ENCODE measurements at regions of chr7 and their contacts with region 1.

Region 1: GRCh38 chr7:38222481-38223096 is 44.5 kb downstream of the STARD3NL start:
- DNase-seq: peak; percentile 50
- H3K4me3 ChIP-seq: no peak overlapping the region
- H3K27ac ChIP-seq: no peak overlapping the region
- H3K4me1 ChIP-seq: no peaks in the 10 kb centered on the region
- H3K27me3 ChIP-seq: no peaks in the 10 kb centered on the region
- CTCF ChIP-seq: peak; percentile 87 to 89

Region 2: DNA sequence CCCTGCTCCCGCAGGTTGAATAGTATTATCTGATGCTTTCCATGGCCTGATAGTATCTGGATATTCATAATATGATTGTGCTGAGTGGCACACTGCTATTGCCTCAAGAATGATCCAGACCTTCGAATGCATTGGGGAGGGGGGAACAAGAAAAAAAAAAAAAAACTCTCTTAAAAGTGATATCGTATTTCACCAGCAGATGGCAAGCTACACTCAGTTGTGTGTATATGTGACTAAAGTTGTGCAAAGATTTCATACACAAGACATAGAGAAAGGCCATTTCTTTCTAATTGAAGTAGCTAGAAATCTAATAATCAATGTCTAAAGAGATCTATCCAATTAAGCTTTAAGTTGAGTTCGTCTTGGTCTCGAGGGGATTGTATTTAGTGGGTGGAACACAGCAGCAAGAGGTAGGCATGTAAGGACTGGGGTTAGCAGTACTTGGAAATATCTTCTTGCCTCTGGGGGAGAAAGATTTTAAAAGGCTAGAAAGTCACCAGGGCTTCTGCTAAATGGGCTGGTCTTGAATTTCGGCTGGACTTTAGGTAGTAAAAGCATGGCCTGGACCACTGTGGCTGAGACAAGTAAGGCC is 321.3 kb before region 1 on chr7:
- CTCF ChIA-PET with region 1: no interaction called
- dilution Hi-C with region 1: no loop called
- in situ Hi-C with region 1: no loop called
- intact Hi-C with region 1: loop called (anchors 2 kb)
- DNase-seq: peak; percentile 6
- H3K4me3 ChIP-seq: no peak overlapping the region
- H3K27ac ChIP-seq: no peak overlapping the region
- H3K4me1 ChIP-seq: peaks cover 6% of the 10 kb centered on the region
- H3K27me3 ChIP-seq: peaks cover 2% of the 10 kb centered on the region
- CTCF ChIP-seq: peak; percentile 55 to 58

Region 3: GRCh38 chr7:37916673-37917660 is 305.6 kb before region 1 on chr7 and contains the start of gene SFRP4:
- CTCF ChIA-PET with region 1: no interaction called
- dilution Hi-C with region 1: no loop called
- in situ Hi-C with region 1: no loop called
- intact Hi-C with region 1: loop called (anchors 5 kb)
- DNase-seq: peak; percentile 12
- H3K4me3 ChIP-seq: no peak within 1 kb of the TSS
- H3K27ac ChIP-seq: no peak within 1 kb of the TSS
- H3K4me1 ChIP-seq: peaks cover 15% of the 10 kb centered on the region
- H3K27me3 ChIP-seq: peaks cover 10% of the 10 kb centered on the region
- CTCF ChIP-seq: peak; percentile 52 to 61
- total RNA-seq, gene SFRP4: not detected